HAP-1 (cell line): ENCODE measurements at regions of chr14 and their contacts with region 1.

Region 1: GRCh38 chr14:72516936-72517700 is 376.8 kb downstream of the DPF3 start:
- DNase-seq: peak; percentile 5 to 73
- H3K4me3 ChIP-seq: no peak overlapping the region
- H3K4me1 ChIP-seq: no peaks in the 10 kb centered on the region
- H3K27me3 ChIP-seq: no peaks in the 10 kb centered on the region; the same call in none of the 2 replicates

Region 2: DNA sequence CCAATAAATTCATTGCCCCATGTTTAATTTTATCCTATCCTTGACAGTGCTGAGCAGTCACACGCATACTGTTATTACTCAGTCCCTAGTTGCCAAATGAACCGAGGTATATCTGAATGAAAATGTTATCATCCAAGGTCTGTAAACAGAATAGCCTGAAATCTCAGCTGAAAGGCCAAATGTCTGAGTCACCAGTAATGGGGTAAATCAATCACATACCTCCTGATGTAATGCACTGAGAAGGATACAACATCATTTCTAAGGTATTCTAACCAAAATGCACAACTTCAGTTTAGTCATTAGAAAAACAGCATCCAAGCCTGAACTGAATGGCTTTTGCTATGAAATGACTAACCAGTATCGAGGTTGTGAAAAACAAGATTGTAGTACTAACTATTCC is 148.1 kb after region 1 on chr14:
- in situ Hi-C with region 1: no loop called
- DNase-seq: no peak
- H3K4me3 ChIP-seq: no peak overlapping the region
- H3K4me1 ChIP-seq: no peaks in the 10 kb centered on the region
- H3K27me3 ChIP-seq: no peaks in the 10 kb centered on the region

Region 3: GRCh38 chr14:72894623-72895378 is 377.7 kb after region 1 on chr14:
- in situ Hi-C with region 1: loop called (anchors 5 kb)
- DNase-seq: peak; percentile 44 to 62
- H3K4me3 ChIP-seq: peak overlapping the region; percentile 80
- H3K4me1 ChIP-seq: peaks cover 10% of the 10 kb centered on the region
- H3K27me3 ChIP-seq: no peaks in the 10 kb centered on the region

Region 4: GRCh38 chr14:73458151-73458976 is 941.2 kb after region 1 on chr14 and contains the start of gene NUMB:
- in situ Hi-C with region 1: loop called (anchors 25 kb)
- DNase-seq: peak; percentile 98
- H3K4me3 ChIP-seq: peak within 1 kb of the TSS; percentile 86
- H3K4me1 ChIP-seq: peaks cover 54% of the 10 kb centered on the region
- H3K27me3 ChIP-seq: no peaks in the 10 kb centered on the region